A549 (cell line): ENCODE measurements at regions of chr3 and their contacts with region 1.

Region 1: DNA sequence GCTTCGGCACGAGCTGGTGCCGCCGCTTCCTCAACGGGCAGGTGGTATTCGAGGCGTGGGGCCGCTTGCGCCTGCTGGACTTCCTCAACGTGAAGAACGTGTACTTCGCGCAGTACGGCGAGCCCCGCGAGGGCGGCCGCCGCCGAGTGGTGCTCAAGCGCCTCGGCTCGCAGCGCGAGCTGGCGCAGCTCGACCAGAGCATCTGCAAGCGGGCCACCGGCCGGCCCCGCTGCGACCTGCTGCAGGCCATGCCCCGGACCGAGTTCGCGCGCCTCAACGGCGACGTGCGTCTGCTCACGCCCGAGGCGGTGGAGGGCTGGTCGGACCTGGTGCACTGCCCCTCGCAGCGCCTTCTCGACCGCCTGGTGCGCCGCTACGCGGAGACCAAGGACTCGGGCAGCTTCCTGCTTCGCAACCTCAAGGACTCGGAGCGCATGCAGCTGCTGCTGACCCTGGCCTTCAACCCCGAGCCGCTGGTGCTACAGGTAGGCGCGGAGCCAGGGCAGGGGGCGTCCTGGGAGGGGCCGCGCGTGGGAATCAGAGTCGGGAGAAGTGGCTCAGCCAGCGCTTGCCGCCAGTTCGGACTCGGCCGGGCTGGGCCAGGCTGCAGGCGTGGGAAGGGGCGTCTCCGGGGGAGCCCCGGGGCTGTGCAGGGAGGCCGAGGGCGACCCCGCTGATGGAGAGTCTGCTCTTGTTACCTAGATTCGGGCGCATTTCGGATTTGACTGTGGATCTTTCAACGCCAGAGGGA is 1.1 kb downstream of the DIPK2A start:
- DNase-seq: peak; percentile 73 to 81
- ATAC-seq: peak; percentile 58 to 59
- H3K4me3 ChIP-seq: peak overlapping the region; percentile 93
- H3K27ac ChIP-seq: peak overlapping the region; percentile 94 to 98
- H3K4me1 ChIP-seq: peaks cover 24% of the 10 kb centered on the region
- CTCF ChIP-seq: peak; percentile 41; the same call in 2 of the 3 replicates
- EP300 ChIP-seq: no peak
- POLR2A ChIP-seq: peak; percentile 24
- RAD21 ChIP-seq: no peak

Region 2: DNA sequence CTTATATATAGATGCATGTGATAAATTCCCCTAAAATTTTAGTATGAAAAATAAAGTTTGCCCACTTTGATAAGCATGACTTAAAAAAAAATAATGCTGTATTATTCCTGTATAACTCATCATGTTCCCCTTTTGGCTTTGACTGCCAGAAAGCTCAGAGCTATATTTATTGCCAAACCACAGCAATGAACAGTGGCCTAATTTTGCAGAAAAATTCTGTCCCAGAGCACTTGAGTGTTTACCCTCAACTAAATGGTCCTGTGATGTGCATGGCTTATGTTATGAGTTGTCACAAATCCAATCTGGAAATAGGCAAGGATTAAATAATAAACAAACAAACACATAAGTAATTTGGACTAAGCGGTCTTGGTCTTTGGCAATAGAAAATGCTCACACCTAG is 401.1 kb before region 1 on chr3:
- CTCF ChIA-PET with region 1: no interaction called
- POLR2A ChIA-PET with region 1: no interaction called
- DNase-seq: no peak
- ATAC-seq: no peak
- H3K4me3 ChIP-seq: no peak overlapping the region
- H3K27ac ChIP-seq: no peak overlapping the region
- H3K4me1 ChIP-seq: no peaks in the 10 kb centered on the region
- CTCF ChIP-seq: no peak
- EP300 ChIP-seq: no peak
- POLR2A ChIP-seq: no peak
- RAD21 ChIP-seq: no peak

Region 3: DNA sequence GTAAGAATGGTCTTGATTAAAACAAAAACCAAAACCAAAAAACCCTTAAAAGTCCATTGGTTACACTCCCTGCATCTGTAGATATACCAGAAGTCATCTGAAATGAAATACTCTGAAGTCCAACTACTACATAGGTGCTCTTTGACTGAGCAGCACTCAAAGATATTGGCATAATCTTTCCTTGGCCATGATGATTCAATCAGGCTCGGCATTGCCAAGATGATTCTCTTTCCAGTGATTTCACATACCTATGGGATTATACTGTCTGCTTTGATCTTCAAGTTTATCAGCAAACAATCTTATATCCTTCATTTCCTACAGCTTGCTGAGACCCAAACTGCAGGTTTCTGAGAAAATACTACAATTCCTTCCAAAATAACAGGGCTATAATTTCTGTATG is 37.0 kb before region 1 on chr3:
- CTCF ChIA-PET with region 1: no interaction called
- POLR2A ChIA-PET with region 1: interaction called, 11 read pairs
- DNase-seq: no peak
- ATAC-seq: no peak
- H3K4me3 ChIP-seq: no peak overlapping the region
- H3K27ac ChIP-seq: no peak overlapping the region
- H3K4me1 ChIP-seq: no peaks in the 10 kb centered on the region
- CTCF ChIP-seq: no peak
- EP300 ChIP-seq: no peak
- POLR2A ChIP-seq: no peak
- RAD21 ChIP-seq: no peak

Region 4: GRCh38 chr3:143952569-143953072 is 20.1 kb before region 1 on chr3:
- CTCF ChIA-PET with region 1: interaction called, 7 read pairs
- POLR2A ChIA-PET with region 1: interaction called, 17 read pairs
- DNase-seq: no peak
- ATAC-seq: no peak
- H3K4me3 ChIP-seq: no peak overlapping the region
- H3K27ac ChIP-seq: no peak overlapping the region
- H3K4me1 ChIP-seq: no peaks in the 10 kb centered on the region
- CTCF ChIP-seq: no peak
- EP300 ChIP-seq: no peak
- POLR2A ChIP-seq: no peak
- RAD21 ChIP-seq: no peak